MCF 10A (cell line): ENCODE measurements at regions of chr15 and their contacts with region 1.

Region 1: DNA sequence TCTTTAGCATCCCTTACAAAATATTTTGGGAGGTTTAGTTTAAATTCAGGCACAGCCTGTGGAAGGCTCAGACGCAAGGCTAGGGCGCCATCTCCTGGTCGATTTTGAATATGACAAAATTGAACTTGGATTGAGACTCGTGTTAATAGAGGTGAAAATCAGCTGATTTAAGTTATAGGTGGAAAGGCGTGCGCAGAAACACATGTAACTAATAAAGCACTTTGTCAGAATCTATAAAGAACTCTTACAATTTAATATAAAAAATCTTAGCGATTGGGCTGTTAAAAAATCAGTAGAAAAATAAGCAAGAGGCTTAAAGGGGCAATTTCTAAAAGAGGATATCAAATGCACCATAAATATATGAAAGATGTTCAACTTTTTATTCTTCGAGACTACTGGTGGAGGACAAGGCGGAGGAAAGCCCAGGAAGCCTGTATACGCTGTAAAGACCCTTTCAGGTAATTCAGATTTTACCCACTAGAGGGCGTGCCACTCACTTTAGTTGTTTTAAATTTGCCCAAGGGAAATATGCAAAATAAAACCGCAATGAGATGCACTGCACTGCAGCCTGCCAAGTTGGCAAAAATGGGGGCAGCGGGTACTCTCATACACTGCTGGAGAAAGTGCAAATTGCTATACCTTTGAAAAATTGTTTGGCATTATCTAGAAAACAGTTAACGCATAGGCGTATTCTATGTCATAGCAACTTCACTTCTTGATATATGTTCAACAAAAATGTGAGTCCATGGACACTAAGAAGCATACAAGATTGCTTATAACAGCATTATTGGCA is 64.7 kb downstream of the SLC30A4 start:
- DNase-seq: peak; percentile 88
- H3K4me3 Mint-ChIP-seq: peak overlapping the region; percentile 72
- H3K27ac Mint-ChIP-seq: peak overlapping the region; percentile 70
- H3K4me1 Mint-ChIP-seq: peaks cover 28% of the 10 kb centered on the region
- H3K27me3 Mint-ChIP-seq: no peaks in the 10 kb centered on the region
- CTCF ChIP-seq: peak; percentile 68

Region 2: GRCh38 chr15:45205192-45205591 is 252.6 kb before region 1 on chr15:
- CTCF ChIA-PET with region 1: no interaction called
- POLR2A ChIA-PET with region 1: interaction called, 3 read pairs
- intact Hi-C with region 1: loop called (anchors 2 kb)
- DNase-seq: peak; percentile 80
- H3K4me3 Mint-ChIP-seq: no peak overlapping the region
- H3K27ac Mint-ChIP-seq: no peak overlapping the region
- H3K4me1 Mint-ChIP-seq: peaks cover 6% of the 10 kb centered on the region
- H3K27me3 Mint-ChIP-seq: no peaks in the 10 kb centered on the region
- CTCF ChIP-seq: peak; percentile 75

Region 3: DNA sequence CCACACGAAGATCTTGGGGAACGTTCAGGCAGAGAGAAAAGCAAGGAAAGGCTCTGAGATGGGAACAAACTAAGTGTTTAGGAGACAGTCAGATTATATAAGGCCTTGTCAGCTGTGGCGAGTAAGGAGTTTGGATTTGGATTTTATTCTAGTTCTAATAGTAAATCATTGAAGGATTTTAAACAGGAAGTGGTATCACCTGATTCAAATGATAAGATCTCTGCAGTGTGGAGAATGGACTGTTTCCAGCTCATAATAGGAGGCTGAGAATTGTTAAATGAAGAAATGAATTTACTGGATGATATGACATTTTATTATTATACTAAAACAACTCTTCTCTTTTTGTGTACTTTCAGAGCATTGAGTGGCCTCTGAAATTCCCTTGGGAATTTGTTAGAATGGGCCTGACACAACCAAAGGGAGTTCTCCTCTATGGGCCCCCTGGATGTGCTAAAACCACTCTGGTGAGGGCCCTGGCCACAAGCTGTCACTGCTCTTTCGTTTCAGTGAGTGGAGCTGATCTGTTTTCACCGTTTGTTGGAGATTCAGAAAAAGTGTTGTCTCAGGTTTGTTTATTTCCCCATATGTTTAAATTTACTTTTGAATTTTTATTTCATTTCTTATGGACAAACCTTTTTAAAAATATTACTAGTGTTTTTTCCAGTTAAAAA is 43.5 kb before region 1 on chr15:
- CTCF ChIA-PET with region 1: interaction called, 11 read pairs
- POLR2A ChIA-PET with region 1: no interaction called
- intact Hi-C with region 1: no loop called
- DNase-seq: no peak
- H3K4me3 Mint-ChIP-seq: no peak overlapping the region
- H3K27ac Mint-ChIP-seq: no peak overlapping the region
- H3K4me1 Mint-ChIP-seq: peaks cover 14% of the 10 kb centered on the region
- H3K27me3 Mint-ChIP-seq: no peaks in the 10 kb centered on the region
- CTCF ChIP-seq: no peak

Region 4: GRCh38 chr15:45442500-45443135 is 15.2 kb before region 1 on chr15:
- CTCF ChIA-PET with region 1: interaction called, 52 read pairs
- POLR2A ChIA-PET with region 1: interaction called, 11 read pairs
- intact Hi-C with region 1: no loop called
- DNase-seq: peak; percentile 88
- H3K4me3 Mint-ChIP-seq: no peak overlapping the region
- H3K27ac Mint-ChIP-seq: no peak overlapping the region
- H3K4me1 Mint-ChIP-seq: peaks cover 37% of the 10 kb centered on the region
- H3K27me3 Mint-ChIP-seq: no peaks in the 10 kb centered on the region
- CTCF ChIP-seq: no peak

Region 5: GRCh38 chr15:45522328-45523160 is 64.7 kb after region 1 on chr15 and contains the start of gene SLC30A4:
- CTCF ChIA-PET with region 1: interaction called, 3 read pairs
- POLR2A ChIA-PET with region 1: no interaction called
- intact Hi-C with region 1: loop called (anchors 2 kb)
- DNase-seq: peak; percentile 37
- H3K4me3 Mint-ChIP-seq: peak within 1 kb of the TSS; percentile 89
- H3K27ac Mint-ChIP-seq: peak within 1 kb of the TSS; percentile 19
- H3K4me1 Mint-ChIP-seq: peaks cover 15% of the 10 kb centered on the region
- H3K27me3 Mint-ChIP-seq: no peaks in the 10 kb centered on the region
- CTCF ChIP-seq: peak; percentile 26
- total RNA-seq, gene SLC30A4: 3.4 and 3.8 TPM in 2 replicates

Region 6: GRCh38 chr15:45594319-45594718 is 136.5 kb after region 1 on chr15:
- CTCF ChIA-PET with region 1: interaction called, 35 read pairs
- POLR2A ChIA-PET with region 1: interaction called, 4 read pairs
- intact Hi-C with region 1: no loop called
- DNase-seq: no peak
- H3K4me3 Mint-ChIP-seq: no peak overlapping the region
- H3K27ac Mint-ChIP-seq: no peak overlapping the region
- H3K4me1 Mint-ChIP-seq: peaks cover 4% of the 10 kb centered on the region
- H3K27me3 Mint-ChIP-seq: no peaks in the 10 kb centered on the region
- CTCF ChIP-seq: no peak

Region 7: DNA sequence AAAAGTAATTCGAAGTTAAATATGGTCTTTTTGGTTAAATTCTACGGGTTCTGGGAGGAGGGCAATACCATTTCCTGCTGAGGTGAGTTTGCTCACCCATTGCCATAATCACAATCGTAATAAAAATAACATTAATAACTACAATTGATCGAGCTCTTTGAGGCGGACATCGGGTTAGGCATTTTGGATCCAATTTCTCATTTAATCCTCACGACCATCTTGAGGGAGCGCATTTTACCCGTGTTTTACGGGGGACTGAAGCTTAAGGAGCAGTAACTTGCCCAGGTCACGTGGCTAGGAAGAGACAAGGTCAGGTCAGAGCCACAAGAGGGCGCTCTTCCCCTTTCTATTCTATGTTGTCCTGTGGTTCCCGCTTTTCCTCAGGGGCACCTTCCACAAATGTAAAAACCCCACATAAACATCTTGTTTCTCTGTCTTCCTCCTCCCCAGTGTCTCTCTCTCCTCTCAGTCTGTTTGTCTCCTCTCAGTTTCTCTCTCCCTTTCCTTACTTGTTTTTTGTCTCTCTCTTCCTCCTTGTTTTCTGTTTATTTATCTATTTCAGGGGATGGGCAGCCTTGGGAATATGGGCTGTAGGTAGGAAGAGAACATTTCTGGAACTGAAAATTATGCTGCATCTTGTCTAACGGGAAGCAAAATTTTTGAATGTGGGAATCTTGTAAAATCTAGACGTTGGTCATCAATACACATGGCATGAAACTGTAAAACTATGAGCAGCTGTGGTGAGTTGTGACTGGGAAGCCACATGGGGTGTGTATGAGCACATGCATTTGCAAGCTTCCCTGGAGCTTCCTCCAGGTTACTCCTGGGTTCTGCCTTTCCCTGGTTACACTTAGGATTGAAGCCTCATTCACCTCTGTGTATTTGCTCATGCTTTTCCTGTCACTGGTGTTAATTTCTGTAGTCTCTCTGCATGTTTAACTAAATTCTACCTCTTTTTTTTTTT is 248.0 kb after region 1 on chr15:
- CTCF ChIA-PET with region 1: no interaction called
- POLR2A ChIA-PET with region 1: no interaction called
- intact Hi-C with region 1: loop called (anchors 5 kb)
- DNase-seq: peak; percentile 86
- H3K4me3 Mint-ChIP-seq: peak overlapping the region; percentile 87
- H3K27ac Mint-ChIP-seq: peak overlapping the region; percentile 79
- H3K4me1 Mint-ChIP-seq: peaks cover 22% of the 10 kb centered on the region
- H3K27me3 Mint-ChIP-seq: no peaks in the 10 kb centered on the region
- CTCF ChIP-seq: peak; percentile 79